Activated CD8-positive, alpha-beta T cell treated with anti-CD3 and anti-CD28 coated beads for 36 hours (primary cell): ENCODE measurements at regions of chr9 and their contacts with region 1.

Region 1: DNA sequence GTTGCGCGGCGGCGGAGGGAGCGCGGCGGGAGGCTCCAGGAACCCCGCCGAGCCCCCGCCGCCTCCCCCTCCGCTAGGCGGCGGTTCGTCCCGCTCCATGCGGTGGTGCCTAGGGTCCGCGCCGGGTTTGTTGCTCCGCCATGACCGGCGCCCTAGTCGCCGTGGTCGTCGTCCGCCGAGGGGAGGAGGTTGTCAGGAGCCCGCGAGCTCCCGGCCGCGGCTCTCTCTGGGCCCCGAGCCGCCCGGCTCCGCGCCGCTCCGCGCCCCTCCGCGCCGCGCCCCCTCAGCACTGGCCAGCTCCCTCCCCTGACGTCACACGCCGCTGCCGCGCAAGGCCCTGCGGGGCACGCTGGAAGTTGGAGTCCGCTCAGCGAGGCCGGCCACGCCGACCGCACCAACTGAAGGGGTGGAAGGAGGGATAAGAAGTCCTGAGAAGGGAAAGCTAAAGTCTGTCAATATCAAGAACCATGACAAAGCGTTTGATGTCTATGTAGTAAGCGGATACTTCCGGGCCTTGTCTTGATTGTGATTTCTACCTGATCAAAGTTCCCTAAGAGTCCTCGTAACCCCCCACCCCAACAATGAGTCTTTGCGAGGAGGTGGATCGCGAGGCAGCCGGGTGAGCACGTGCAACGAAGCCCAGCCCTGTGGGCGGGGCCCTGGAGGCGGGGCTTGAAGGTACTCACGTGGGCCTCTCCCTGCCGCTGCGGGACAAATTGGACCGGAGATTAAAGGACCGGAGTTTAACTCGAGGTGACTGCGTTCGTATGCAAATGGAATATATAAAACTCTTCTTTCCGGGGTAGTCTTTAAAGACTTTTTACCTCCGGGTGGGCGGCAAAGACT is at the start of gene NR6A1:
- DNase-seq: peak; percentile 97
- ATAC-seq: peak; percentile 92
- H3K4me3 Mint-ChIP-seq: peak within 1 kb of the TSS; percentile 80
- H3K27ac Mint-ChIP-seq: peak within 1 kb of the TSS; percentile 91
- H3K4me1 Mint-ChIP-seq: peaks cover 34% of the 10 kb centered on the region
- H3K27me3 Mint-ChIP-seq: peaks cover 61% of the 10 kb centered on the region
- CTCF ChIP-seq: no peak
- total RNA-seq, gene NR6A1: 0.74 to 1.1 TPM

Region 2: GRCh38 chr9:124794902-124795491 is 23.8 kb after region 1 on chr9:
- CTCF ChIA-PET with region 1: interaction called, 12 read pairs
- POLR2A ChIA-PET with region 1: no interaction called
- intact Hi-C with region 1: no loop called
- DNase-seq: no peak
- ATAC-seq: no peak
- H3K4me3 Mint-ChIP-seq: no peak overlapping the region
- H3K27ac Mint-ChIP-seq: no peak overlapping the region
- H3K4me1 Mint-ChIP-seq: no peaks in the 10 kb centered on the region
- H3K27me3 Mint-ChIP-seq: peaks cover 17% of the 10 kb centered on the region
- CTCF ChIP-seq: no peak

Region 3: GRCh38 chr9:124820698-124821623 is 49.7 kb after region 1 on chr9:
- CTCF ChIA-PET with region 1: no interaction called
- POLR2A ChIA-PET with region 1: no interaction called
- intact Hi-C with region 1: no loop called
- DNase-seq: no peak
- ATAC-seq: no peak
- H3K4me3 Mint-ChIP-seq: no peak overlapping the region
- H3K27ac Mint-ChIP-seq: no peak overlapping the region
- H3K4me1 Mint-ChIP-seq: peaks cover 7% of the 10 kb centered on the region
- H3K27me3 Mint-ChIP-seq: peaks cover 7% of the 10 kb centered on the region
- CTCF ChIP-seq: no peak

Region 4: GRCh38 chr9:124839612-124840299 is 68.5 kb after region 1 on chr9:
- CTCF ChIA-PET with region 1: interaction called, 66 read pairs
- POLR2A ChIA-PET with region 1: no interaction called
- intact Hi-C with region 1: no loop called
- DNase-seq: no peak
- ATAC-seq: peak; percentile 62
- H3K4me3 Mint-ChIP-seq: no peak overlapping the region
- H3K27ac Mint-ChIP-seq: no peak overlapping the region
- H3K4me1 Mint-ChIP-seq: no peaks in the 10 kb centered on the region
- H3K27me3 Mint-ChIP-seq: peaks cover 15% of the 10 kb centered on the region
- CTCF ChIP-seq: no peak

Region 5: DNA sequence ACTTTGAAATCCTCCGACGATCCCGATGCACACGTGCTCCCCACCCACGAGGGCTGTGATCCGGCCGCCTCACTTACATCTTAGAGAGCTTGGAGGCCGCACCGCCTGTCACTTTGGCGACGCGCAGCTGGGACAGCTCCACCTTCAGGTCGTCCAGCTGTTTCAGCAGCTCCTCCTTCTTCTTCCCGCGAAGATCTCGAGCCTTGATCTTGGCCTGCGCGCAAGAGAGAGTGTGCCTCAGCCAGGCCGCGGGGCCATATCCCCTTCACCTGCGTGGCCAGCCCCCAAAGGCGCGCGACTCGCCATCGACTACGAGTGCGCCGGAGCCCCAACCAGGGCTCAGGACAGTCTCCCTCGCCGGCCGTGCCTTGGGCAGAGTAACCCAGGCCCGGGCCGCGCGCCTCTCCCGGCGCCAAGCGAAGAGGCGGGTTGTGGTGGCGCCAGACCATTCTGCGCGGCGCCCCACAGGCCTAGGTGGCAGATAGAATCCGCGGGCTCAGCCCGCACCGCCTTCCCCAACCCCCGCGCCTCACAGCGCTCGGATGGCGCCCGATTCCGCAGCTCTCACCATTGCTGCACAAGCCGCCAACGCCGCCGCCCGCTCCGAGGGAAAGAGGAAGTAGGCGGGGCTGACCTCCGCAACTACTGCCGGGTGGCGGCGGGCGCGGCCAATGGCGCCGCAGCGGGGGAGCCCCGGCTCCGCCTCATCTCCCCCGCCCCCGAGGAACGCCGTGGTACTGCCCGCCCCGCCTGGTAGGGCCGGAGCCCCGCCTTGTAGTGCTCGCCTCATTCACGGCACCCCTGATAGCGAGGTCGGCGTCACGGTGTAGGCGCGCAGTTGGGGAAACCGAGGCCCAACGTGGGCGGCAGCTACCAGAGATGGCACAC is 90.3 kb after region 1 on chr9 and contains the starts of genes ARPC5L and RPL35:
- CTCF ChIA-PET with region 1: interaction called, 431 read pairs
- POLR2A ChIA-PET with region 1: interaction called, 120 read pairs
- intact Hi-C with region 1: no loop called
- DNase-seq: peak; percentile 97
- ATAC-seq: peak; percentile 97
- H3K4me3 Mint-ChIP-seq: peak within 1 kb of the TSS; percentile 86
- H3K27ac Mint-ChIP-seq: peak within 1 kb of the TSS; percentile 96
- H3K4me1 Mint-ChIP-seq: peaks cover 42% of the 10 kb centered on the region
- H3K27me3 Mint-ChIP-seq: no peaks in the 10 kb centered on the region
- CTCF ChIP-seq: no peak
- total RNA-seq, gene ARPC5L: 72.7 to 73.9 TPM
- total RNA-seq, gene RPL35: 2,301 to 2,341 TPM

Region 6: GRCh38 chr9:124894741-124895170 is 123.5 kb after region 1 on chr9:
- CTCF ChIA-PET with region 1: interaction called, 18 read pairs
- POLR2A ChIA-PET with region 1: no interaction called
- intact Hi-C with region 1: no loop called
- DNase-seq: peak; percentile 58
- ATAC-seq: peak; percentile 84
- H3K4me3 Mint-ChIP-seq: no peak overlapping the region
- H3K27ac Mint-ChIP-seq: no peak overlapping the region
- H3K4me1 Mint-ChIP-seq: peaks cover 7% of the 10 kb centered on the region
- H3K27me3 Mint-ChIP-seq: peaks cover 2% of the 10 kb centered on the region
- CTCF ChIP-seq: peak; percentile 28